Endothelial cell of umbilical vein (primary cell): ENCODE measurements at regions of chr7 and their contacts with region 1.

Region 1: DNA sequence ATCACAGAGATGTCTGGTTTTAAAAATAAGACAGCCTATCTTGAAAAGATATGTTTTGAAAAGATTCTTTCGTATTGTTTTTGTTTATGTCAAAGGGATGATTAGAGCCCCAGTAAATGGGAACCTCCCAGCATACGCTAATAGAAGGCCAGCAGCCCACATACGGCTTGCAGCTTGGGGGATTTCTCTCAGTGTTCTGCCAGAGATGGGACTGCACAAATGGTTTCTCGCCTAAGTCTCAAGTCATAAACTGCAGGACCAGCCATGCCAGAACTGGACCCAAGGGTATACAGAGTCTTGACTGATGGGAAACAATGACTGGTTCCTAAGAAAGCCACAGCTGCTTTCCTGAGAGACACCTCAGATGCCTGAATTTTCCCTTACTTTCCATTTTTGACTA is 306.9 kb upstream of the DGKB start:
- DNase-seq: no peak
- H3K4me3 ChIP-seq: no peak overlapping the region
- H3K27ac ChIP-seq: no peak overlapping the region
- H3K4me1 ChIP-seq: no peaks in the 10 kb centered on the region
- H3K27me3 ChIP-seq: no peaks in the 10 kb centered on the region
- CTCF ChIP-seq: no peak
- POLR2A ChIP-seq: no peak

Region 2: GRCh38 chr7:15219758-15220157 is 10.3 kb after region 1 on chr7:
- CTCF ChIA-PET with region 1: no interaction called
- POLR2A ChIA-PET with region 1: no interaction called
- dilution Hi-C with region 1: no loop called
- intact Hi-C with region 1: no loop called
- DNase-seq: peak; percentile 54
- H3K4me3 ChIP-seq: no peak overlapping the region
- H3K27ac ChIP-seq: no peak overlapping the region
- H3K4me1 ChIP-seq: peaks cover 7% of the 10 kb centered on the region
- H3K27me3 ChIP-seq: no peaks in the 10 kb centered on the region
- CTCF ChIP-seq: no peak
- POLR2A ChIP-seq: no peak

Region 3: GRCh38 chr7:15737601-15738000 is 528.2 kb after region 1 on chr7:
- CTCF ChIA-PET with region 1: no interaction called
- POLR2A ChIA-PET with region 1: no interaction called
- dilution Hi-C with region 1: no loop called
- intact Hi-C with region 1: loop called (anchors 10 kb)
- DNase-seq: peak; percentile 85
- H3K4me3 ChIP-seq: no peak overlapping the region
- H3K27ac ChIP-seq: no peak overlapping the region
- H3K4me1 ChIP-seq: no peaks in the 10 kb centered on the region
- H3K27me3 ChIP-seq: no peaks in the 10 kb centered on the region
- CTCF ChIP-seq: no peak
- POLR2A ChIP-seq: no peak